ENCODE measurements at regions of chr1 and their contacts with region 1.

Region 1: GRCh38 chr1:62175568-62176179 is 19.0 kb upstream of the L1TD1 start:
- DNase-seq: peak; percentile 39
- H3K4me3 ChIP-seq: no peak overlapping the region
- H3K27ac ChIP-seq: no peak overlapping the region
- H3K4me1 ChIP-seq: peaks cover 8% of the 10 kb centered on the region
- H3K27me3 ChIP-seq: peaks cover 1% of the 10 kb centered on the region
- CTCF ChIP-seq: peak; percentile 77 to 79

Region 2: GRCh38 chr1:62230709-62231108 is 55.0 kb after region 1 on chr1:
- CTCF ChIA-PET with region 1: no interaction called
- dilution Hi-C with region 1: no loop called
- in situ Hi-C with region 1: no loop called
- intact Hi-C with region 1: loop called (anchors 5 kb)
- DNase-seq: peak; percentile 99
- H3K4me3 ChIP-seq: no peak overlapping the region
- H3K27ac ChIP-seq: peak overlapping the region; percentile 82
- H3K4me1 ChIP-seq: peaks cover 53% of the 10 kb centered on the region
- H3K27me3 ChIP-seq: no peaks in the 10 kb centered on the region
- CTCF ChIP-seq: no peak

Region 3: GRCh38 chr1:62286786-62287224 is 111.1 kb after region 1 on chr1:
- CTCF ChIA-PET with region 1: interaction called, 12 read pairs
- dilution Hi-C with region 1: loop called (anchors 5 kb)
- in situ Hi-C with region 1: no loop called
- intact Hi-C with region 1: no loop called
- DNase-seq: peak; percentile 55
- H3K4me3 ChIP-seq: no peak overlapping the region
- H3K27ac ChIP-seq: no peak overlapping the region
- H3K4me1 ChIP-seq: peaks cover 23% of the 10 kb centered on the region
- H3K27me3 ChIP-seq: no peaks in the 10 kb centered on the region
- CTCF ChIP-seq: no peak

Region 4: GRCh38 chr1:62407405-62408009 is 231.8 kb after region 1 on chr1:
- CTCF ChIA-PET with region 1: interaction called, 4 read pairs
- dilution Hi-C with region 1: no loop called
- in situ Hi-C with region 1: loop called (anchors 5 kb)
- intact Hi-C with region 1: loop called (anchors 1 kb)
- DNase-seq: peak; percentile 44
- H3K4me3 ChIP-seq: no peak overlapping the region
- H3K27ac ChIP-seq: no peak overlapping the region
- H3K4me1 ChIP-seq: no peaks in the 10 kb centered on the region
- H3K27me3 ChIP-seq: no peaks in the 10 kb centered on the region
- CTCF ChIP-seq: peak; percentile 77 to 78

Region 5: GRCh38 chr1:62514746-62515423 is 339.2 kb after region 1 on chr1:
- CTCF ChIA-PET with region 1: no interaction called
- dilution Hi-C with region 1: no loop called
- in situ Hi-C with region 1: no loop called
- intact Hi-C with region 1: loop called (anchors 10 kb)
- DNase-seq: peak; percentile 19
- H3K4me3 ChIP-seq: no peak overlapping the region
- H3K27ac ChIP-seq: no peak overlapping the region
- H3K4me1 ChIP-seq: no peaks in the 10 kb centered on the region
- H3K27me3 ChIP-seq: no peaks in the 10 kb centered on the region
- CTCF ChIP-seq: no peak